ENCODE measurements at regions of chr4 and their contacts with region 1.

Region 1: GRCh38 chr4:41957634-41958033 is 22.4 kb downstream of the TMEM33 start:
- DNase-seq: no peak
- H3K4me3 Mint-ChIP-seq: no peak overlapping the region
- H3K27ac Mint-ChIP-seq: no peak overlapping the region
- H3K4me1 Mint-ChIP-seq: no peaks in the 10 kb centered on the region
- H3K27me3 Mint-ChIP-seq: no peaks in the 10 kb centered on the region

Region 2: DNA sequence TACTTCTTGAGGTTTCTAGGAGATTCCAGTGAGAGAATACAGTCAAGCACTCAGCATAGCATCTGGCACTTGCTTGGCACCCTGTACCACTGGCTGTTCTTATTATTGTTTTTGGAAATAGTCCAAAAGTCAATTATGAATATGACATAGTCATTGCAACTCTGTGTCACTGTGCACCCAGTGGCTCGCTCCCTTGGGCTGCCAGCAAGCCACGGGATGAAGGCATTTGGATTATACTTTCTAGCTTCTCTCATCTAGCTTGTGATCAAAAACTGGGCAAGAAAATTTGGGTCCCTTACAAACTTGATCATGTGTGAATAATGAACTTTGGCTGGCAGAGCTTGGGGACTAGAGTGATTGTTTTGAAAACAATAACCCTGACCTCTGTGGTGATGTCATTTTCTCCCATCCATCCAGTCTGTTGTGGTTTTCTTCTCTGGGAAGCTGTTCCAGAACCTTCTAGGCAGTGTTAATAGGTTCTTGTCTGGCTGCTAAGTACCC is 452.4 kb before region 1 on chr4:
- intact Hi-C with region 1: no loop called
- DNase-seq: no peak
- H3K4me3 Mint-ChIP-seq: no peak overlapping the region
- H3K27ac Mint-ChIP-seq: no peak overlapping the region
- H3K4me1 Mint-ChIP-seq: no peaks in the 10 kb centered on the region
- H3K27me3 Mint-ChIP-seq: no peaks in the 10 kb centered on the region

Region 3: DNA sequence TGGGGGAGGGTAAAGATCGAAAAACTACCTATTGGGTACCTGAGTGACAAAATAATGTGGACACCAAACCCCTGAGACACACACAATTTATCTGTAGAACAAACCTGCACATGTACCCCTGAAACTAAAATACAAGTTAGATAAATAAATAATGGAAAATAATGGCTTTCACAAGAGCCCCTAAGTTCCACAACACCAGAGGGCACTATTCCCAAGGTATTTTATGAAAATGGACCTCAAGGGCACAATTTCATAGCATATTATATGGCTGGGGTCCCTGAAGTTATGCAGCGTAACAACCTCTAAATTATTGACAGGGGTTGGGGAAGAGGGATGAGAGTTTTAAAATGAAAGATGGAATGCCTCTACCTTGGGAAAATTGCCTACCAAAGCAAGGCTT is 103.7 kb before region 1 on chr4:
- intact Hi-C with region 1: no loop called
- DNase-seq: no peak
- H3K4me3 Mint-ChIP-seq: no peak overlapping the region
- H3K27ac Mint-ChIP-seq: no peak overlapping the region
- H3K4me1 Mint-ChIP-seq: no peaks in the 10 kb centered on the region
- H3K27me3 Mint-ChIP-seq: peaks cover 15% of the 10 kb centered on the region

Region 4: GRCh38 chr4:41990365-41991111 is 32.9 kb after region 1 on chr4 and contains the start of gene SLC30A9:
- intact Hi-C with region 1: loop called (anchors 2 kb)
- DNase-seq: peak; percentile 91
- H3K4me3 Mint-ChIP-seq: peak within 1 kb of the TSS; percentile 99
- H3K27ac Mint-ChIP-seq: peak within 1 kb of the TSS; percentile 92
- H3K4me1 Mint-ChIP-seq: peaks cover 28% of the 10 kb centered on the region
- H3K27me3 Mint-ChIP-seq: no peaks in the 10 kb centered on the region
- total RNA-seq, gene SLC30A9: 40.4 and 43.2 TPM in 2 replicates

Region 5: GRCh38 chr4:42078184-42078801 is 120.7 kb after region 1 on chr4:
- intact Hi-C with region 1: loop called (anchors 10 kb)
- DNase-seq: no peak
- H3K4me3 Mint-ChIP-seq: no peak overlapping the region
- H3K27ac Mint-ChIP-seq: no peak overlapping the region
- H3K4me1 Mint-ChIP-seq: no peaks in the 10 kb centered on the region
- H3K27me3 Mint-ChIP-seq: no peaks in the 10 kb centered on the region

Region 6: GRCh38 chr4:42104521-42104920 is 146.9 kb after region 1 on chr4:
- intact Hi-C with region 1: no loop called
- DNase-seq: no peak
- H3K4me3 Mint-ChIP-seq: no peak overlapping the region
- H3K27ac Mint-ChIP-seq: no peak overlapping the region
- H3K4me1 Mint-ChIP-seq: no peaks in the 10 kb centered on the region
- H3K27me3 Mint-ChIP-seq: no peaks in the 10 kb centered on the region

Region 7: DNA sequence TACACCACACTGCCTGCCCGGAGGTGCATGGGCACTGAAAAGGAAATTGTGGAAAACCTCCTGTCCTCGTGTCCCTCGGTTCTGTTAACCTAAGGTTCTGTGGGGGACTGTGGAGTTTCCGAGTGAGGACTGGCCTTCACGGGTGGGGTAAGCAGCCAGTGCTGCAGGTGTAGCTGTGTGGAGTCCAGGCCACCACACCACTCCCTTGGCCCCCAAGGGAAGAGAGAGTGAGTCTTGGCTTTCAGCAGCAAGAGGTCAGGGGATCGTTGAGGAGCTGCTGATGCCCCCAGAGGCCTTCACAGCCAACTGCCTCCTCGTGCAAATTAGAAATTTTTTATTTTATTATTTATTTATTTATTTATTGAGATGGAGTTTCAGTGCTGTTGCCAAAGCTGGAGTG is 174.5 kb after region 1 on chr4:
- intact Hi-C with region 1: no loop called
- DNase-seq: no peak
- H3K4me3 Mint-ChIP-seq: no peak overlapping the region
- H3K27ac Mint-ChIP-seq: no peak overlapping the region
- H3K4me1 Mint-ChIP-seq: no peaks in the 10 kb centered on the region
- H3K27me3 Mint-ChIP-seq: peaks cover 2% of the 10 kb centered on the region

Measured in activated T-helper 1 cell treated with anti-CD3 and anti-CD28 coated beads, Interleukin-12 subunit alpha, Interleukin-12 subunit beta, Interleukin-2, Interleukin-4 antibody, amounts not matched to agents 30 ng/mL and 10 ng/mL and 1 ng/mL, durations not matched to agents 14 hours and 24 hours and 36 hours (primary cell).